Transverse colon (tissue), 4 donors: ENCODE measurements at regions of chr6 and their contacts with region 1.

Region 1: GRCh38 chr6:125099211-125100073 is 54.1 kb upstream of the TPD52L1 start:
- DNase-seq: peak; percentile 61
- H3K4me3 ChIP-seq: peak overlapping the region; percentile 31 to 50 (median 40)
- H3K27ac ChIP-seq: peak overlapping the region; percentile 11 to 58 (median 39)
- H3K4me1 ChIP-seq: peaks cover 0 to 16% (median 13%) of the 10 kb centered on the region in 4 donors
- H3K27me3 ChIP-seq: no peaks in the 10 kb centered on the region
- CTCF ChIP-seq: no peak
- EP300 ChIP-seq: no peak
- POLR2A ChIP-seq: no peak

Region 2: DNA sequence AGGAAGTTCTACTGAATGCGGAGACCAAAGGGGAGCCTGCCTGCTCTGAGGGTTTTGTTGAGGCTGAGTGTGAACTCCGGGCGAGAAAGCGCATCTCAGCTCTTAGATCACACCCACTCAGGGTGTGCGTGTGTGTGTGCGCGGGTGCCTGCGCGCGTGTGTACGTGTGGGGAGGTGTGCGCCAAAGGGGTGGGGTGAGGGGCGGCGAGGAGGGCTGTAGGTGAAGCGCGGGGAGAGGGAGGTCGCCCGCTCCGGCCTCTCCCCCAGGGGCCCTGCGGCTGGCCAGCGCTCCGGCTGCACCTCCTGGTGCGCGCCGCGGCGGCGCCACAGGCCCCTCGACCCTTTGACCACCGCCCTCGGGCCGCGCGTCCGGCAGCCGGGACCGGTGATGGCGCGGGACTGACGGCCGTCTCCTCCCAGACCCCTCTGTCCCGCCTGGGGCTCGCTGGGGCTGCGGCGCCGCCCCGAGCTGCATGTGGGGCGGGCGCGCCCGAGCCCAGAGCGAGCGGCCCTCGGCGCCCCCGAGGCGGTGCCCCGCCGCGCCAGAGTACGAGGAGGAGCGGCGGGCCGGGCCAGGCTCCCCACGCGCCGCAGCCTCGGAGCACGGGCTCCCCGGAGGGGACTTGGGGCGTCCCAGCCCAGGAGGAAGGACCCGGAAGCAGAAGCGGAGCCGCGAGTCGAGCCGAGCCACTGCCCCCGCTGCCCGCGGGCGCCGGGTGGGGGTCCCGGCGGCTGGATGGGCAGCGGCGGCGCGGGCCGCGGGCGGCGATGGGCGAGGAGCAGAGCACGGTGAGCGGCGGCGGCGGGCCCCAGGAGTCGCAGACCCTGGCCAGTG is 137.4 kb before region 1 on chr6 and contains the start of gene RNF217:
- in situ Hi-C with region 1: no loop called
- intact Hi-C with region 1: loop called (anchors 5 kb)
- DNase-seq: peak; percentile 50
- H3K4me3 ChIP-seq: peak within 1 kb of the TSS; percentile 87 to 96 (median 88)
- H3K27ac ChIP-seq: peak within 1 kb of the TSS; percentile 92 to 96 (median 94)
- H3K4me1 ChIP-seq: peaks cover 0 to 39% (median 15%) of the 10 kb centered on the region in 4 donors
- H3K27me3 ChIP-seq: no peaks in the 10 kb centered on the region
- CTCF ChIP-seq: peak in 1 of 5 experiments; percentile 28
- EP300 ChIP-seq: no peak
- POLR2A ChIP-seq: peak; percentile 40
- total RNA-seq, gene RNF217: 6.0 to 24.3 (median 16.0) TPM